Activated CD4-positive, alpha-beta memory T cell treated with anti-CD3 and anti-CD28 coated beads for 36 hours (primary cell): ENCODE measurements at regions of chr10 and their contacts with region 1.

Region 1: GRCh38 chr10:22648547-22648961 is 65.8 kb downstream of the PIP4K2A start:
- DNase-seq: no peak
- H3K4me3 Mint-ChIP-seq: peak overlapping the region; percentile 74
- H3K27ac Mint-ChIP-seq: peak overlapping the region; percentile 95
- H3K4me1 Mint-ChIP-seq: peaks cover 93% of the 10 kb centered on the region
- H3K27me3 Mint-ChIP-seq: no peaks in the 10 kb centered on the region

Region 2: GRCh38 chr10:22554461-22555182 is 93.9 kb before region 1 on chr10:
- CTCF ChIA-PET with region 1: no interaction called
- POLR2A ChIA-PET with region 1: no interaction called
- intact Hi-C with region 1: no loop called
- DNase-seq: no peak
- H3K4me3 Mint-ChIP-seq: no peak overlapping the region
- H3K27ac Mint-ChIP-seq: no peak overlapping the region
- H3K4me1 Mint-ChIP-seq: peaks cover 19% of the 10 kb centered on the region
- H3K27me3 Mint-ChIP-seq: no peaks in the 10 kb centered on the region

Region 3: GRCh38 chr10:22615819-22616499 is 32.6 kb before region 1 on chr10:
- CTCF ChIA-PET with region 1: no interaction called
- POLR2A ChIA-PET with region 1: no interaction called
- intact Hi-C with region 1: loop called (anchors 2 kb)
- DNase-seq: peak; percentile 57
- H3K4me3 Mint-ChIP-seq: peak overlapping the region; percentile 79
- H3K27ac Mint-ChIP-seq: peak overlapping the region; percentile 86
- H3K4me1 Mint-ChIP-seq: peaks cover 97% of the 10 kb centered on the region
- H3K27me3 Mint-ChIP-seq: no peaks in the 10 kb centered on the region

Region 4: GRCh38 chr10:22666287-22667092 is 17.9 kb after region 1 on chr10:
- CTCF ChIA-PET with region 1: no interaction called
- POLR2A ChIA-PET with region 1: interaction called, 3 read pairs
- intact Hi-C with region 1: loop called (anchors 1 kb)
- DNase-seq: peak; percentile 71
- H3K4me3 Mint-ChIP-seq: peak overlapping the region; percentile 72
- H3K27ac Mint-ChIP-seq: peak overlapping the region; percentile 84
- H3K4me1 Mint-ChIP-seq: peaks cover 75% of the 10 kb centered on the region
- H3K27me3 Mint-ChIP-seq: no peaks in the 10 kb centered on the region

Region 5: DNA sequence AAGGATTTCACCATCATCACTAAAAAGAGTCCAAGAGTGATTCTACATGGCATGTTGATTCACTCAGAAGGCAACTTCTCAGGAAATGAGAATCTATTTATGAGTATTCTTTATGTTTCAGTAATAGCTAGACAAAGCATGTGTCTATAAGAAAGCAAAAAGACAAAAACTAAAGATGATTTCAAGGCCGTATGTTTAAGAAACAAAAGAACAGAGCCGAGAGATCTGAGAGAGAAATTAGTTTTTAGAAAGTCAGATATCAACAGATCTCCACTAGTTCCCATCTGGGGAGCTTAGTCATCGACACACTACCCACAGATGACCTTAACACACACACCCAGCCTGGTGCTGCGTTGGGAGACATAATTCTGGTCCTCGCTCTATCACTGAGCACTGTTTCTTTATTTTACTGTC is 44.8 kb after region 1 on chr10:
- CTCF ChIA-PET with region 1: no interaction called
- POLR2A ChIA-PET with region 1: interaction called, 3 read pairs
- intact Hi-C with region 1: loop called (anchors 1 kb)
- DNase-seq: peak; percentile 62
- H3K4me3 Mint-ChIP-seq: peak overlapping the region; percentile 55
- H3K27ac Mint-ChIP-seq: peak overlapping the region; percentile 95
- H3K4me1 Mint-ChIP-seq: peaks cover 93% of the 10 kb centered on the region
- H3K27me3 Mint-ChIP-seq: no peaks in the 10 kb centered on the region